Naive thymus-derived CD4-positive, alpha-beta T cell (primary cell): ENCODE measurements at regions of chr22 and their contacts with region 1.

Region 1: DNA sequence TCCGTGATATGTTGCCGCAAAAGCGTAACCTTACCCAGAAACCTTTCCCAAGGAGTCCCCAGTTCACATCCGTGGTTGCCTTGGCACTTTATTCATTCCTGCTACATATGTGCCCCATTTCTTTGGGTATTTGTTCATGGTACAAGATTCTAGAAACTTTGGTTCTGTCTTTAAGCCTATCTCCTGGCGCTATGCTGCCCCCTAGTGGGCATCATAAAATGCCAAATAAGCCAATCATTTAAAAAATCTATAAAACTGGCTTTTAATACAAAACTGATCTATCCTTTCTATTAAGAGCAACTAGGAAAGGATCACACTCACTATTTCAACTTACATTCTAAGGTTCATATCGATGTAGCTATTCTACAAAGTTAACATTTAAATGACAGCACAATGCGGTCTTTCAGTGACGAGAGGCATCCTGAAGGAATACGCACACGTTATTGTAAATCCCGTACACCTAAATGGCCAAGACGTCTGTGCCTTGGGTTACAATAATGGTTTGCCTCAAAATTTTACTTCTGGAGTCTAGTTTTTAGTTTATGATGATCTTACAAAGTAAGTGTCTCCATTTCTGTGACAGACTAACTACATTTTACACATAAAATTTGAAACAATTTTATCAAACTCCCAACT is 16.2 kb downstream of the PIWIL3 start:
- DNase-seq: peak; percentile 15 to 62 (median 44)
- ATAC-seq: peak; percentile 51
- H3K4me3 ChIP-seq: no peak overlapping the region
- H3K4me3 Mint-ChIP-seq: no peak overlapping the region
- H3K27ac ChIP-seq: no peak overlapping the region
- H3K27ac Mint-ChIP-seq: no peak overlapping the region
- H3K4me1 ChIP-seq: no peaks in the 10 kb centered on the region
- H3K4me1 Mint-ChIP-seq: peaks cover 0 to 1% (median 0%) of the 10 kb centered on the region in 7 donors
- H3K27me3 ChIP-seq: no peaks in the 10 kb centered on the region
- H3K27me3 Mint-ChIP-seq: peaks cover 0 to 17% (median 0%) of the 10 kb centered on the region in 5 donors

Region 2: DNA sequence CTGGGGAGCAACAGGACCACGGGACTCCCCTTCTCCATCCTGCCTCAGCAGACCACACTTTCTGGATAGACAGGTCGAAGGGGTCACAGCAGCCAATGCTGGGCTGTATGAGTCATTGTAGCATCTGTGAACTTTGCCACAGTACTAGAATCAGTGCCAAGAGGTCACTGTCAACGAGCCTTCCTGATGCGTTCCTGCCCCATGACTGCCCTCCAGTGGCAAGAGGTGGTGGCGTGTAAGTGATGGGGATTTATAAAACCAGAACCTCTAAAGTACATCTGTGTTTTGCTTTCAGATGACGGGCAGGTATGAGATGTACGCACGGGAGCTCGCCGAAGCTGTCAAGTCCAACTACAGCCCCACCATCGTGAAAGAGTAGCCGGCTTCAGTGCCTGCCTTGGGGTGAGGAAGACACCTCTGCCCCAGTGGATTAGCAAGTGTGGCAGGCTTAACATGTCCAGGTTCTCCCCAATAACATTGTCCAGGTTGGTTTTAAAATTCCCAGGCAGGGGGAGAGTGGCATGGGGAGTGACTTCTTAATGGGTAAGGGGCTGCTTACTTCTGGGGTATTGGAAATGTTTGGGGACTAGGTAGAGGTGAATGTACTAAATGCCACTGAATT is 232.8 kb before region 1 on chr22:
- CTCF ChIA-PET with region 1: no interaction called
- POLR2A ChIA-PET with region 1: no interaction called
- intact Hi-C with region 1: loop called in 1 of 2 experiments (anchors 1 kb)
- DNase-seq: peak; percentile 54 to 77 (median 71)
- ATAC-seq: peak; percentile 98
- H3K4me3 ChIP-seq: no peak overlapping the region
- H3K4me3 Mint-ChIP-seq: no peak overlapping the region
- H3K27ac ChIP-seq: no peak overlapping the region
- H3K27ac Mint-ChIP-seq: no peak overlapping the region
- H3K4me1 ChIP-seq: no peaks in the 10 kb centered on the region
- H3K4me1 Mint-ChIP-seq: peaks cover 0 to 12% (median 9%) of the 10 kb centered on the region in 7 donors
- H3K27me3 ChIP-seq: no peaks in the 10 kb centered on the region
- H3K27me3 Mint-ChIP-seq: peaks cover 0 to 7% (median 0%) of the 10 kb centered on the region in 5 donors

Region 3: GRCh38 chr22:24601217-24602104 is 156.8 kb before region 1 on chr22:
- CTCF ChIA-PET with region 1: no interaction called
- POLR2A ChIA-PET with region 1: no interaction called
- intact Hi-C with region 1: loop called in 1 of 2 experiments (anchors 10 kb)
- DNase-seq: no peak
- ATAC-seq: peak; percentile 60
- H3K4me3 ChIP-seq: no peak overlapping the region
- H3K4me3 Mint-ChIP-seq: peak overlapping the region in 2 of 10 donors; percentile 28 to 58
- H3K27ac ChIP-seq: no peak overlapping the region
- H3K27ac Mint-ChIP-seq: peak overlapping the region in 2 of 9 donors; percentile 38 to 67
- H3K4me1 ChIP-seq: peaks cover 0 to 8% of the 10 kb centered on the region in 2 donors
- H3K4me1 Mint-ChIP-seq: peaks cover 14 to 40% (median 19%) of the 10 kb centered on the region in 7 donors
- H3K27me3 ChIP-seq: no peaks in the 10 kb centered on the region
- H3K27me3 Mint-ChIP-seq: no peaks in the 10 kb centered on the region

Region 4: GRCh38 chr22:24768537-24769374 is 10.5 kb after region 1 on chr22:
- CTCF ChIA-PET with region 1: interaction called, 13 read pairs
- POLR2A ChIA-PET with region 1: no interaction called
- intact Hi-C with region 1: no loop called
- DNase-seq: peak in 5 of 9 donors; percentile 12 to 48 (median 21)
- ATAC-seq: peak; percentile 42
- H3K4me3 ChIP-seq: no peak overlapping the region
- H3K4me3 Mint-ChIP-seq: no peak overlapping the region
- H3K27ac ChIP-seq: no peak overlapping the region
- H3K27ac Mint-ChIP-seq: no peak overlapping the region
- H3K4me1 ChIP-seq: no peaks in the 10 kb centered on the region
- H3K4me1 Mint-ChIP-seq: peaks cover 0 to 6% (median 0%) of the 10 kb centered on the region in 7 donors
- H3K27me3 ChIP-seq: no peaks in the 10 kb centered on the region
- H3K27me3 Mint-ChIP-seq: peaks cover 0 to 19% (median 5%) of the 10 kb centered on the region in 5 donors

Region 5: GRCh38 chr22:24845041-24845898 is 87.0 kb after region 1 on chr22:
- CTCF ChIA-PET with region 1: interaction called, 10 read pairs
- POLR2A ChIA-PET with region 1: no interaction called
- intact Hi-C with region 1: no loop called
- DNase-seq: no peak
- ATAC-seq: peak; percentile 61
- H3K4me3 ChIP-seq: no peak overlapping the region
- H3K4me3 Mint-ChIP-seq: peak overlapping the region in 1 of 10 donors; percentile 43
- H3K27ac ChIP-seq: no peak overlapping the region
- H3K27ac Mint-ChIP-seq: no peak overlapping the region
- H3K4me1 ChIP-seq: peaks cover 0 to 12% of the 10 kb centered on the region in 2 donors
- H3K4me1 Mint-ChIP-seq: peaks cover 0 to 12% (median 4%) of the 10 kb centered on the region in 7 donors
- H3K27me3 ChIP-seq: no peaks in the 10 kb centered on the region
- H3K27me3 Mint-ChIP-seq: peaks cover 0 to 4% (median 0%) of the 10 kb centered on the region in 5 donors